GM10248 (cell line): ENCODE measurements at regions of chr14 and their contacts with region 1.

Region 1: DNA sequence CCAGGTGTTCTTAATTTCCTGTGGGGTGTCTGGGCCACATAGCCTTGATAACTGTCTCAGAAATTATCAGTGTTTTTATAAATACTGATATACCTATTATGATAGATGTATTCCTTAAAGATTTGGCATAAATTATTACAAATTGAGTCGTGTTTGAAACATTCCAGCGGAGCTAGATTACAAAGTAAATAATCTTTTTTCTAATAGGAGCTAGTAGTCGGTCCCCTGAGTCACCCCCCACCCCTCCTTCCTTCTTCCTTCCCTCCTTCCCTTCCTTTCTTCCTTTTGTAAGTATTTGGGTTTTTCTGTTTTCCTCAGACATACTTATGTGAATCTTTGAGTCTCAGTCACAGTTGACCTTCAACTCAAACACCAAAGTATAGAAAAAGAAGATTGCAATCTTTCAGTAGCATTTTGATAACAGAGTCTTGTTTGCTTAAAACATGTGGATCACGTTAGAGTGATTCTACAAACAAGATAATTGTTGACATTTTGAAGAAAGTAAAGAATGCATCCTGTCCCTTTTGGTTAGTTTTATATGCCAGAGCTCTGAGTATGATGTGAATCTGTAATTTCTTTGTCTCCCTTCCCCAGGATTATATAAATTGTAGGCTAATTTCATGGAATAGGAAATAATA is 263.9 kb downstream of the FUT8 start:
- DNase-seq: no peak
- CTCF ChIP-seq: no peak

Region 2: GRCh38 chr14:65613131-65613650 is 63.3 kb before region 1 on chr14:
- CTCF ChIA-PET with region 1: no interaction called
- POLR2A ChIA-PET with region 1: no interaction called
- DNase-seq: no peak
- CTCF ChIP-seq: no peak

Region 3: DNA sequence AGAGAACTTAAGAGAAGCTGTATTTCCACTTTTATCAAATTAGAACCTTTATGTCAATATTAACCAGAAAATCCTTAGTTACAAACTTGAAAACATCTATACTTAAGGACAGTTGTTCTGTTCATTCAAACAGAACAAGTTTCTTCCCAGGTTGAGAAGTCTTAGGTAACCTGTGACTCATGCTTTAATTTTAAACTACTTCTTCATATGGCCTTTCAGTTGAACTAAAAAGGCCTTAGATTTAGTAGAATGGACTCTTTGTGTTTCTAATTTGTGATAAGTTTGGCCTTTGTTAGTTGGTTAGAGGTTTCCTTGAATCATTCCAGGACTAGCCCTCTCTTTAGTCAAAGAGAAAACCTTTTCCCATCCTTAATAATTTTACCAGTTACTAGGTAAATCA is 10.3 kb after region 1 on chr14:
- CTCF ChIA-PET with region 1: interaction called, 14 read pairs
- POLR2A ChIA-PET with region 1: no interaction called
- DNase-seq: no peak
- CTCF ChIP-seq: no peak